A549 (cell line): ENCODE measurements at regions of chr2 and their contacts with region 1.

Region 1: DNA sequence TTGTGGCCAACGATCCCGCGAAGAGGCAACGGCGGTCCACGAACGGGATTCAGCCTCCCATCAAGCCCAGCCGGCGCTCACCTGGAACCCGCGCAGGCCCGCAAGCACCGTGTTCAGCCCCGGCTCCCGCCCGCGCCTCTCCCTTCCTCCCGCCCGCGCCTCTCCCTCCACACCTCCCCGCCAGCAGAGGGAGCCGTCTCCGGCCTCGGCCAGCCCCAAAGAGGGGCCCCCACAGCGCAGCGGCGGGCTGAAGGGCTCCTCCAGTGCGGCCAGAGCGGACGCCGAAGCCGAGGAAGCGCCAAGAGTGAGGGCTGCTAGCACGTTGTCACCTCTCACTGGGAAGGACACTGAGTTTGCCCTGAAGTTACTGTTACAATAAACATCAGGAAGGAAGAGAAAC is 55.3 kb upstream of the LAPTM4A start:
- DNase-seq: no peak
- ATAC-seq: no peak
- H3K4me3 ChIP-seq: no peak overlapping the region
- H3K27ac ChIP-seq: no peak overlapping the region
- H3K4me1 ChIP-seq: peaks cover 32% of the 10 kb centered on the region
- CTCF ChIP-seq: peak; percentile 12; the same call in 1 of the 3 replicates
- EP300 ChIP-seq: no peak
- POLR2A ChIP-seq: no peak
- RAD21 ChIP-seq: no peak

Region 2: DNA sequence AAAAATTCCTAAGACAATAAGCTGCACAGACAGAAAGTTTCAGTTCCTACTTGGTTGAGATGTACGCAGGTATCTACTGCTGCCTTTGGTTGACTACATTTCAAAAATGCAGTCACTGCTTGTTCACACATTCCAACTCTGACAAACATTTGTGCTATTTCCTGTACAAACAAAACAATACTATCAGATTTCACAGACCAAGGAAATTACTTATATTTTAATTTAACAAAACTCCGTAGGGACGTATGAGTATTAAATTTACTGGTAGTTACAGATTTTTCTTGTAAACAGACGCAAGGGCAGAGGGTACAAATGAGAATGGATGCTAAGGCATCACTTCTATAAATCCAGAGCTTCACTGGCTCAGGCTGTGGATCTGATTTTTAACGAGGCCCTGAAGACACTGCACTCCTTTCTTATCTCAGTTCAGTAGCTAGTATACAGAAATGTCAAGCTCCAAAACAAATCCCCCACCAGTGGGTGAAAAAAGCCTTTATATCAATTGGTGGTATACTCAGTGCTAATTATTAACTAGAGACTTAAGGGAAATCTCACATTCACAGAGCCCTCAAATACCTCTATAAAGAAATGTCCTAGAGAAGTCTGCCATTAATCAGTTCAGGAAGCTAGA is 173.3 kb before region 1 on chr2:
- CTCF ChIA-PET with region 1: no interaction called
- POLR2A ChIA-PET with region 1: no interaction called
- DNase-seq: peak; percentile 64 to 88
- ATAC-seq: peak; percentile 92 to 96
- H3K4me3 ChIP-seq: peak overlapping the region; percentile 23
- H3K27ac ChIP-seq: peak overlapping the region; percentile 76 to 88
- H3K4me1 ChIP-seq: peaks cover 32% of the 10 kb centered on the region
- CTCF ChIP-seq: no peak
- EP300 ChIP-seq: peak in 1 of 2 experiments; percentile 46; a peak in 1 of 5 replicates
- POLR2A ChIP-seq: no peak
- RAD21 ChIP-seq: no peak

Region 3: GRCh38 chr2:19955544-19956422 is 151.0 kb before region 1 on chr2:
- CTCF ChIA-PET with region 1: interaction called, 29 read pairs
- POLR2A ChIA-PET with region 1: no interaction called
- DNase-seq: peak; percentile 78 to 90
- ATAC-seq: peak; percentile 100
- H3K4me3 ChIP-seq: no peak overlapping the region
- H3K27ac ChIP-seq: no peak overlapping the region
- H3K4me1 ChIP-seq: no peaks in the 10 kb centered on the region; the same call in 2 of the 3 replicates
- CTCF ChIP-seq: peak; percentile 100
- EP300 ChIP-seq: no peak
- POLR2A ChIP-seq: no peak
- RAD21 ChIP-seq: peak; percentile 98

Region 4: DNA sequence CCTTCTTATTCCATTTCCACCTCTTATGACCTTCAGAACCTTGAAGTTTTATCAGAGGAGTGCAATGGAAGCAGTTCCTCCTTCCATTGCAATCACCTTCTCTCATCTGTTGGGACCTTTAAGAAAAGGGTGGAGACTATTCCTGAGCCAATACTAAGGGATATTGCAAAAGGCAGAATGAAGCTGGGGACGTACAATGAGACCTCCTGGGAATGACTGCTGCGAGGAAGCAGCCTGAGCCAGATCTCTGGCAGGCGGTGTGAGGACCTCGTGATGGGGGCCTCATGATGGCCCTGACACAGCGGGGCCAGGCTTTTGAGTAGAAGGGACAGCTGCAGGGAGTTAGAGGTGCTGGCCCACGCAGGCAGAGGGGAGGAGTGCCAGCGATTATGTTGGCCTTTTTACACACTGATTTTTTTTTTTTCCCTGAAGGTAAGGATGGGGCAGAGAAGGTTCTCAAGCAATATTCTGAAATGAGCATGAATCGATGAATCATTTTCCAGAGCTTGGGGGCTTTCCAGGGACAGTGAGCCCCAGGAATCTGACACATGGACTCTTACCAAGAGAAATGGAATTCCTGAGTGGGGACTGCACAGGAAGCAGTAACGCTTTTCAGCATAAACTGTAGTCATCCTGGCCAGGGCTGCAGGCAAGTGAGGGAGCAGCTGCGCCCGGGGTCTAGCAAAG is 15.3 kb before region 1 on chr2:
- CTCF ChIA-PET with region 1: interaction called, 27 read pairs
- POLR2A ChIA-PET with region 1: no interaction called
- DNase-seq: peak; percentile 39 to 49
- ATAC-seq: peak; percentile 58 to 66
- H3K4me3 ChIP-seq: no peak overlapping the region
- H3K27ac ChIP-seq: peak overlapping the region; percentile 70 to 82
- H3K4me1 ChIP-seq: peaks cover 40% of the 10 kb centered on the region
- CTCF ChIP-seq: no peak
- EP300 ChIP-seq: no peak
- POLR2A ChIP-seq: no peak
- RAD21 ChIP-seq: no peak

Region 5: GRCh38 chr2:20179755-20180594 is 73.2 kb after region 1 on chr2:
- CTCF ChIA-PET with region 1: interaction called, 20 read pairs
- POLR2A ChIA-PET with region 1: interaction called, 9 read pairs
- DNase-seq: peak; percentile 94 to 95
- ATAC-seq: peak; percentile 73 to 85
- H3K4me3 ChIP-seq: no peak overlapping the region
- H3K27ac ChIP-seq: peak overlapping the region; percentile 90 to 98
- H3K4me1 ChIP-seq: peaks cover 67% of the 10 kb centered on the region
- CTCF ChIP-seq: no peak; the same call in 2 of the 3 replicates
- EP300 ChIP-seq: peak in 1 of 2 experiments; percentile 40; a peak in 1 of 5 replicates
- POLR2A ChIP-seq: peak; percentile 57
- RAD21 ChIP-seq: peak; percentile 39 to 65; a peak in 4 of 5 replicates

Region 6: DNA sequence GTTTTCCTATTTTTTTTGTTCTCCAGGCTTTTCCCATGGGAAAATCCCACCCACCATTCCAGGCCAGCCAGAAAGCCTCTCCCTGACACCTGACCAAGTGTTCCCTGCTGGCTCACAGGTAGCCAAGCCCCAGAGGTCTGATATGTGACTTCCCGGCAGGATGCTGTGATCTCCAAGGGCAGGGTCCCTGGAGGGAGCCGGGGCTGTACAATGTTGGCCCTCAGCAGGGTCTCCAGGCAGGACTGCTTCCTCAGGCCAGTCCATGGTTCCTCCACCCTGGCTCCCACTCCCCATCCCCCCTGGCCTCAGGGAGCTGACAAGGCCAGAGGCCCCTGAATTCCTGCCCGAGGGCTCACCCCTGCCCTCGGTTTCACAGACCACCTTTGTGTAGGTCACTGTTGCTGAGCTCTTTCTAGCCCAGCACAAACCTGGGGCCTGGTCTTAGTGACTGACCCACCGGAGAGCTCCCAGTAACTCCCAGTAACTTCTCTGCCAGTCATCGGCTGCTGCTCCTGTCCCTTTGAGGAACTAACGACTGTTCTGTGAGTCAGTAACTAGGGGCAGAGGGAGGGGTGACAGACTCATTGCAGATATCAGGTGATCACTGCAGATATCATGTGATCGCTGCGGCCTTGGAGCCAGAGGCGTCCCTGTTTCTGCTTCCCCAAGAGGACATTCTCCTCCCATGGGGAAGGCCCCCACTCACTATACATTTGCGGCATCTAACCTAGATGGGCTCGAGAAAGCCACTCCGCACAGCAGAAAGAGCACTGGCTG is 79.5 kb after region 1 on chr2:
- CTCF ChIA-PET with region 1: interaction called, 59 read pairs
- POLR2A ChIA-PET with region 1: no interaction called
- DNase-seq: peak; percentile 42 to 64
- ATAC-seq: no peak
- H3K4me3 ChIP-seq: no peak overlapping the region
- H3K27ac ChIP-seq: peak overlapping the region; percentile 90 to 98
- H3K4me1 ChIP-seq: peaks cover 65% of the 10 kb centered on the region
- CTCF ChIP-seq: no peak
- EP300 ChIP-seq: no peak
- POLR2A ChIP-seq: no peak
- RAD21 ChIP-seq: no peak

Region 7: GRCh38 chr2:20291106-20291564 is 184.4 kb after region 1 on chr2:
- CTCF ChIA-PET with region 1: interaction called, 85 read pairs
- POLR2A ChIA-PET with region 1: no interaction called
- DNase-seq: peak; percentile 91 to 93
- ATAC-seq: peak; percentile 100
- H3K4me3 ChIP-seq: no peak overlapping the region
- H3K27ac ChIP-seq: peak overlapping the region in 1 of 2 experiments; percentile 33; a peak in 1 of 6 replicates
- H3K4me1 ChIP-seq: peaks cover 23% of the 10 kb centered on the region
- CTCF ChIP-seq: peak; percentile 94
- EP300 ChIP-seq: no peak
- POLR2A ChIP-seq: no peak
- RAD21 ChIP-seq: peak; percentile 63 to 64